ENCODE measurements at regions of chr10 and their contacts with region 1.

Region 1: DNA sequence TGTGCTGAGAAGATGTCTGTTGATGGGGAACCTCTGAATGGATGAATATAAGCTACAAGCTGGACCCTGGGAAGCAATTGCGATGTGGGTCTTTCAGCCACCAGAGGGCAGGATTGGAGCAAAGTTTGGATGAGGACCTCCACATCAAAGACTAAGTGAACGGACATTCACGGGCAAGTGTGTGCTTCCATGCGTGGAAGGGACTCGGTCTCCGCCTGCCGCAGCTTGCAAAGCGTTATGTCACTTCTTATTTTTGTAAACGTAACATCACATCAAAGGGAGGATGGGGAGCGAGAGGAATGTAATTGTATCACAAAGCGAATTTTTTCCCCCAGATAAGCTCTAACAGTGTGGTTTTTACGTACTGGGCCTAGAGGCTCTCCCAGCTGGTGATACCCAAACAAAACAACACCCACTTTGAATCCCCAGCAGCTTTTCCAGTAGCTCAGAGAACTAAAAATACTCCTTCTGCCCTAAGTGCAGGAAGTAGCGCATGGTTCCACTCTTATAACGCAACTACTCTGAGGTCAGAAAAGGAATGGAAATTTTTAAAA is 65.0 kb downstream of the VWA2 start:
- DNase-seq: peak; percentile 91
- H3K4me3 ChIP-seq: no peak overlapping the region
- H3K27ac ChIP-seq: no peak overlapping the region
- H3K4me1 ChIP-seq: peaks cover 10% of the 10 kb centered on the region
- H3K27me3 ChIP-seq: no peaks in the 10 kb centered on the region
- CTCF ChIP-seq: peak; percentile 67 to 81 (median 70)
- POLR2A ChIP-seq: no peak

Region 2: GRCh38 chr10:114173921-114174694 is 130.0 kb before region 1 on chr10 and contains the start of gene CCDC186:
- intact Hi-C with region 1: no loop called
- DNase-seq: peak; percentile 99
- H3K4me3 ChIP-seq: peak within 1 kb of the TSS; percentile 94 to 97
- H3K27ac ChIP-seq: peak within 1 kb of the TSS; percentile 95 to 97
- H3K4me1 ChIP-seq: peaks cover 8% of the 10 kb centered on the region
- H3K27me3 ChIP-seq: no peaks in the 10 kb centered on the region
- CTCF ChIP-seq: no peak
- POLR2A ChIP-seq: no peak
- total RNA-seq, gene CCDC186: 30.8 to 39.8 TPM

Region 3: DNA sequence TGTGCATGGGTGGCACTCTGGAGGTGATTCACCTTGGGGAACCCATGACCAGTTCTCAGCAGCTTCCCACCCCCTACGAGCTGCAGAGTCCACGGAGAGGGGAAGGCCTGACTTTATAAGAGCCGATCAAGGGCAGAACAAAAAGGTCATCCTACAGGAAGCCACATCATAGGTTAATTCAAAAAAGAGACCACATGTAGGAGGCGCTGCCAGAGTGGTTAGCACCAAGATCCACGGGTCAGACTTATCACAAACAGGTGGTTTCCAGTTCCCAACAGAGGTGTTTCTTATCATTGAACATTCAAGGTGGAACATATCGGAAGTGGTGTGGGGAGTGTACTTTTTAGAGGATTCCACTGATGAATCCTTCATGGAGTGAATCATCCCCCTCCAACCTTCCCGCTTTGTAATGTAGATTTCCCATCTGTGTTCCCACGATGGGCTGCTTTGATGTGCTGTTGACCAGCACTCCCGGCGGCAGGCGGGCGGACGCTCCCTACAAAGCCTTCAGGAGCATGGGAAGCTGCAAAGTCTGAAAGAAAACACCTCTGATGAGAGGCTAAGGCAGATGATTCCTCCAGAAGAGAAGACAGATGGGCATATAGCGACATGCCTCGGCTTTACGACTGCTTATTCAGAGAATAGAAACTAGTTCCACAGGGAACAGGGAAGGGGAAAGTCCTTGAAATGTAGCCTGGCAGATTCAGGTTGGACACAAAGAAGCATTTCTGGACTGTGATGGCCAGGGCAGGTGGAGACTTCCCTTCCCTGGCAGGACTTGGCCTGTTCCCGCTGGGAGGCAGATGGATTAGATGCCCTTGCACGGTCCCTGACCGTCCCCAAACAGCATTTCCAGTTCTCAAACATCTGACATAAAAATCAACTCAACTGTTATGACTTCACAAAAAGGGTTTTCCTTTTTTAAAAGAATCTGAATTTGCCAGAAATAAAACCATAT is 33.7 kb after region 1 on chr10:
- intact Hi-C with region 1: no loop called
- DNase-seq: no peak
- H3K4me3 ChIP-seq: no peak overlapping the region
- H3K27ac ChIP-seq: no peak overlapping the region
- H3K4me1 ChIP-seq: peaks cover 15% of the 10 kb centered on the region
- H3K27me3 ChIP-seq: no peaks in the 10 kb centered on the region
- CTCF ChIP-seq: no peak
- POLR2A ChIP-seq: no peak

Region 4: DNA sequence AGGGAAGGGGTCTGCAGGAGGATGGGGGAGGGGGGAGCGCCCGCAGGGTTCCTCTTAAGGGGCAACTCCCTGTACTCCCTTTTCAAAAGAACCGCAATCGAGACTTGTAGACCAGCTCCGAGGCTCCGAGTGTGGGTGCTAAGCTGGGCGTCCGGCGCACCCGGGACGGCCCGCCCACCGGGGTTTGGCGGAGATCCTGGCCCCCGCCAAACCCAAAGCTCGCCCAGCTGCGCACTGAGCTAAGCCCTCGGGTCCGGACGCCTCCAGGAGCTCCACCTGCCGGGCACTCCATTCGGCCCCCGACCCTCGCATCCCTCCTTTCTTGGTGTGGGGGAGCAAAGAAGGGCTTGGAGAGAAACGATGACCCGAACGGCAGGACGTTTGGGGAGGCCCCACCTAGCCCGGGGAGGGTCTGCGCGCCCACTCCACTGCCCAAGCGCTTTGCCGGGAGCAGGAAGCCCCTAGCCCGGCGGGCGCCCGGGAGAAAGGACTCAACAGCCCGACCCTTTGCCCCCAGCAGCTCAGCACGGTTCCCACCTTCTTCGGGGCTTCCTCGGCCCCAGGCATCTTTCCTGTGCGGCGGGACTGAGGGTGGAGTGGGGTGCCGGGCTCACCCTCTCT is 99.6 kb after region 1 on chr10:
- intact Hi-C with region 1: loop called (anchors 10 kb)
- DNase-seq: no peak
- H3K4me3 ChIP-seq: peak overlapping the region; percentile 53 to 60
- H3K27ac ChIP-seq: peak overlapping the region; percentile 11 to 45
- H3K4me1 ChIP-seq: peaks cover 20% of the 10 kb centered on the region
- H3K27me3 ChIP-seq: no peaks in the 10 kb centered on the region
- CTCF ChIP-seq: no peak
- POLR2A ChIP-seq: no peak

Region 5: DNA sequence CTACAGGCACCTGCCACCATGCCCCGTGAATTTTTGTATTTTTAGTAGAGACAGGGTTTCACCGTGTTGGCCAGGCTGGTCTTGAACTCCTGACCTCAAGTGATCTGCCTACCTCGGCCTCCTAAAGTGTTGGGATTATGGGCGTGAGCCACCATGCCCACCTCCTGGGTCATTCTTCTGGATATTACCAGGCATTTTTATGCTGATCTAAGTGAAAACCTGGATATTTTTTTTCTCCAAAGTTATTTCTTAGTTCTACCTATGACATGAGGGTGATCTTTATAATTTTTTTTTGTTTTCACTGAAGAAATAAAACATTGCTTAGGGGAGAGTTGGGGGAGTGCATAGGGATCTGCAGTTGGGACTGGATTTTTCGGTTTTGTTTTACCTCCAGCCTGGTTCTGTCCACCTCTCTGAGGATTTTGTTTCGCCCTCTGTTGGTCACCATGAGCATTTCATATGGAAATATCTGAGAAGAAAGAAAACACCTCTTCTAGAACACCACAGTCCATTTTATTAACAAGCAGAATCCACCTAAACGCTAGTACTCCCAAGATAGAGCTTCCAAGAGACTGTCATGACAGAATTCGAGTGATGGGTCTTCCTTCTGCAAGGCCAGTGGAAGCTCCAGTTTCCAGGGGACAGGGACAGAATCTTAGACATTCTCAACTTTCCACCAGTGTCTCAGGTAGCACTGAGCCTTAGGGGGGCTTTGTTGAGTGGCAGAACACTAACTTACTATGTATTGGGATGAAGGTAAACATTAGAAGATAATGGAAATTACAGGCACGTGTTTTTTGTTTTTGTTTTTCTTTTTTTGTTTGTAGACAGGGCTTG is 133.6 kb after region 1 on chr10:
- intact Hi-C with region 1: loop called (anchors 10 kb)
- DNase-seq: no peak
- H3K4me3 ChIP-seq: no peak overlapping the region
- H3K27ac ChIP-seq: no peak overlapping the region
- H3K4me1 ChIP-seq: peaks cover 4% of the 10 kb centered on the region
- H3K27me3 ChIP-seq: no peaks in the 10 kb centered on the region
- CTCF ChIP-seq: peak in 1 of 3 experiments; percentile 26
- POLR2A ChIP-seq: no peak

Measured in testis (tissue), 5 donors.